ENCODE measurements at regions of chr15 and their contacts with region 1.

Region 1: GRCh38 chr15:82176542-82176941 is 86.0 kb downstream of the EFL1 start:
- DNase-seq: no peak
- ATAC-seq: no peak
- H3K4me3 ChIP-seq: no peak overlapping the region
- H3K4me3 Mint-ChIP-seq: no peak overlapping the region
- H3K27ac ChIP-seq: no peak overlapping the region
- H3K27ac Mint-ChIP-seq: no peak overlapping the region
- H3K4me1 ChIP-seq: no peaks in the 10 kb centered on the region
- H3K4me1 Mint-ChIP-seq: peaks cover 0 to 2% (median 2%) of the 10 kb centered on the region in 3 donors
- H3K27me3 ChIP-seq: no peaks in the 10 kb centered on the region
- H3K27me3 Mint-ChIP-seq: no peaks in the 10 kb centered on the region

Region 2: GRCh38 chr15:81957700-81958099 is 218.8 kb before region 1 on chr15:
- CTCF ChIA-PET with region 1: no interaction called
- POLR2A ChIA-PET with region 1: no interaction called
- DNase-seq: no peak
- ATAC-seq: no peak
- H3K4me3 ChIP-seq: no peak overlapping the region
- H3K4me3 Mint-ChIP-seq: no peak overlapping the region
- H3K27ac ChIP-seq: no peak overlapping the region
- H3K27ac Mint-ChIP-seq: no peak overlapping the region
- H3K4me1 ChIP-seq: no peaks in the 10 kb centered on the region
- H3K4me1 Mint-ChIP-seq: no peaks in the 10 kb centered on the region
- H3K27me3 ChIP-seq: peaks cover 0 to 3% of the 10 kb centered on the region in 2 experiments
- H3K27me3 Mint-ChIP-seq: peaks cover 3 to 4% of the 10 kb centered on the region in 2 donors

Region 3: GRCh38 chr15:82186719-82187406 is 10.3 kb after region 1 on chr15:
- CTCF ChIA-PET with region 1: no interaction called
- POLR2A ChIA-PET with region 1: interaction called in 1 of 2 experiments, 11 read pairs
- DNase-seq: no peak
- ATAC-seq: no peak
- H3K4me3 ChIP-seq: no peak overlapping the region
- H3K4me3 Mint-ChIP-seq: no peak overlapping the region
- H3K27ac ChIP-seq: no peak overlapping the region
- H3K27ac Mint-ChIP-seq: no peak overlapping the region
- H3K4me1 ChIP-seq: no peaks in the 10 kb centered on the region
- H3K4me1 Mint-ChIP-seq: no peaks in the 10 kb centered on the region
- H3K27me3 ChIP-seq: no peaks in the 10 kb centered on the region
- H3K27me3 Mint-ChIP-seq: no peaks in the 10 kb centered on the region